Gastrocnemius medialis (tissue), 4 donors: ENCODE measurements at regions of chr3 and their contacts with region 1.

Region 1: GRCh38 chr3:8470801-8471200 is 30.8 kb upstream of the LMCD1 start:
- DNase-seq: no peak
- ATAC-seq: no peak
- H3K4me3 ChIP-seq: no peak overlapping the region
- H3K27ac ChIP-seq: no peak overlapping the region
- H3K4me1 ChIP-seq: no peaks in the 10 kb centered on the region
- H3K27me3 ChIP-seq: no peaks in the 10 kb centered on the region
- CTCF ChIP-seq: no peak
- POLR2A ChIP-seq: no peak

Region 2: DNA sequence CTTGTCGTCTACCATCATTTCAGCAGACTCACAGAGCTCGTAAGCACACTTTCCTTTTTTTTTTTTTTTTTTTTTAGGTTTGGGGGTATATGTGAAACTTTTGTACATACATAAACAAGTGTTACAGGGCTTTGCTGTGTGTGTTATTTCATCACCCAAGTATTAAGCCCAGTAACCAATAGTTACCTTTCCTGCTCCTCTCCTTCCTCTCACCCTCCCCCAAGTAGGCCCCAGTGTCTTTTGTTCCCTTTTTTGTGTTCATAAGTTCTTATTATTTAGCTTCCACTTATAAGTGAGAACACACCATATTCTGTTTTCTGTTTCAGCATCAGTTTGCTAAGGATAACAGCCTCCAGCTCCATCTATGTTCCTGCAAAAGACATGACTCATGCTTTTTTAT is 863.1 kb before region 1 on chr3:
- in situ Hi-C with region 1: no loop called
- intact Hi-C with region 1: no loop called
- DNase-seq: no peak
- ATAC-seq: no peak
- H3K4me3 ChIP-seq: no peak overlapping the region
- H3K27ac ChIP-seq: no peak overlapping the region
- H3K4me1 ChIP-seq: no peaks in the 10 kb centered on the region
- H3K27me3 ChIP-seq: no peaks in the 10 kb centered on the region
- CTCF ChIP-seq: no peak
- POLR2A ChIP-seq: no peak

Region 3: GRCh38 chr3:8607234-8608040 is 136.6 kb after region 1 on chr3:
- in situ Hi-C with region 1: loop called in 1 of 4 experiments (anchors 10 kb)
- intact Hi-C with region 1: no loop called
- DNase-seq: peak; percentile 66 to 74
- ATAC-seq: peak; percentile 95 to 100
- H3K4me3 ChIP-seq: no peak overlapping the region
- H3K27ac ChIP-seq: peak overlapping the region in 2 of 4 donors; percentile 26 to 37
- H3K4me1 ChIP-seq: peaks cover 27 to 28% of the 10 kb centered on the region in 2 donors
- H3K27me3 ChIP-seq: no peaks in the 10 kb centered on the region
- CTCF ChIP-seq: peak; percentile 77 to 85 (median 82)
- POLR2A ChIP-seq: no peak

Region 4: GRCh38 chr3:9362731-9363530 is 892.1 kb after region 1 on chr3 and contains the start of gene THUMPD3:
- in situ Hi-C with region 1: no loop called
- intact Hi-C with region 1: no loop called
- DNase-seq: peak; percentile 81 to 86
- ATAC-seq: peak; percentile 95 to 97
- H3K4me3 ChIP-seq: peak within 1 kb of the TSS; percentile 70 to 96 (median 79)
- H3K27ac ChIP-seq: peak within 1 kb of the TSS; percentile 85 to 97 (median 89)
- H3K4me1 ChIP-seq: peaks cover 20 to 21% of the 10 kb centered on the region in 2 donors
- H3K27me3 ChIP-seq: no peaks in the 10 kb centered on the region
- CTCF ChIP-seq: peak in 1 of 5 experiments; percentile 24
- POLR2A ChIP-seq: peak; percentile 66 to 85
- total RNA-seq, gene THUMPD3: 22.2 to 39.8 (median 25.2) TPM